B cell (primary cell): ENCODE measurements at regions of chr22 and their contacts with region 1.

Region 1: DNA sequence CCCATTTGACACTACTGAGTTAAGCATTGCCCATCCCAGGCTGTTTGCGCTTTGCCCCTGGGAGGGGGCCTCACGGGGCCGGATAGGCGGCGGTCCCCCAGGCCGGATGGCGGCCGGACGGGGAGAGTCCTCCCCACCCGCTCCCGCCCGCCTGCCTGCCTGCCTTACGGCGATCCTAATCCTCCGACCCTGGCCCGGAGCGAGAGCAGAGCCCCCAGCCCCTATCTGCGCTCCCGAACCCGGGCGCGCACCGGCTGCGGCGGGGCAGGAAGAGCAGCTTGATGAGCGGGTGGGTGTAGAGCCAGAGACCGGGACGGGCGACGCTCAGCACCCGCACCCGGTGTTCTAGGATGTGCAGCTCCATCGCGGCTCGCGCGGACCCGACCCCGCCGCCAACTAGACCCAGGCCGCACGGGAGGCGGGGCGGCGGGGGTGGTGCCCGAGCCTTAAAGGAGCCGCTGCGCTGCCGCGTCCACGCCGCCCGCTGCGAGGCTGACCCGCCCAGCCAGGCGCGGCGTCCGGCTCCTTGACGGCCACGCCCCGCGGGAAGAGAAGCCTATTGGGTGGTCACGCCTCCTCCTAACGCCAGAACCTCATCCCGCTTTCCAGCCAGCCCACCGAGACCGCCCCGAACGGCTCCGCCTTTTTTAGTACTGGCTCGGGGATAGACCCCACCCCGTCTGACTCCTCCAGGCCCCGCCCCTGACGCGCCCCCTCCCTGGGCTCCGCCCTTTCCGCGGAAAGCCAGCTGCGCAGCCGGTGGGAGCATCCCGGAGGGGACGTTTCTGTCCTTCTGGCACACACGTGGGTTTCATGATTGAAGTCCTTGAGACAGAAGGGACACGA is at the start of gene CASTOR1:
- DNase-seq: peak; percentile 86
- ATAC-seq: peak; percentile 83
- H3K4me3 ChIP-seq: peak within 1 kb of the TSS; percentile 48 to 83 (median 70)
- H3K4me3 Mint-ChIP-seq: peak within 1 kb of the TSS; percentile 93
- H3K27ac ChIP-seq: peak within 1 kb of the TSS; percentile 34 to 72
- H3K27ac Mint-ChIP-seq: peak within 1 kb of the TSS; percentile 93
- H3K4me1 ChIP-seq: peaks cover 23 to 44% of the 10 kb centered on the region in 2 donors
- H3K4me1 Mint-ChIP-seq: peaks cover 38% of the 10 kb centered on the region
- H3K27me3 ChIP-seq: no peaks in the 10 kb centered on the region
- H3K27me3 Mint-ChIP-seq: no peaks in the 10 kb centered on the region
- CTCF ChIP-seq: no peak
- total RNA-seq, gene CASTOR1: 12.3 and 16.3 TPM in 2 replicates

Region 2: DNA sequence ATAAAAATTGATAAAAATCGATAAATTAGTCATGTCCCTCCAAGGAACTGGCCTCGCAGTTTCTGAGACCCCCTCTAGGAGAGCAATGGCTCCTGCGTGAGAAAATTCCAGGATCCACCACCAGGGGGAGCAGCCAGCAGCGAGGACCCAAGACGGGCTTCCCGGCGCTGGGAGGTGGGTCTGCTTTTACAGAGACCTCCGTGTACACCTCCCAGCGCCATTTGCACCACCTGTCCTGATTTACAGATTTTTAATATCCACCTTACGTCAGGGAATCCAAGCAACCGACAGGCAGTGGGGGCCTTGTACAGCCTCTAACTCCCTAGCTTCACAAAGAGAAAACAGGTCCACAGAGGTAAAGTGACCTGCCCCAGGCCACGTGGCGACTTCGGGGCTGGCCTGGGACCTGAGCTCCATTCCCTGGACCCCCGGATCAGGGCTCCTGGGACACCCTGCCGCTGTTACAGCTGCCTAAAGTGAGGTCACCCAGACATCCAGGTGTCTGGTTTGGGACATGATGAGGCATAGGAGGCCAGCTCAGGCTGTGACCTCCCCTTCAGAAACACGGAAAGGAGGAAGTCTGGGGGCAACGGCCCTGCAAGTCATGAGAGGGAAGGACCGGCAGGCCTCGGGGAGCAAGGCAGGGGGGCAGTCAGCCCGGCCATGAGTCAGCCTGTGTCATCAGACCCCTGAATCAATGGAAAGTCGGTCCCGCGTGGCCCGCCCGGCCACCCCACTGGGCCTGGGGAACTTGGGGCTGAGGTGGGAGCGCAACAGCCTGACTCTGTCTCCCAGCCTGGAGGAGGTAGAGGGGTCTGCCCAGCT is 26.2 kb before region 1 on chr22:
- CTCF ChIA-PET with region 1: no interaction called
- POLR2A ChIA-PET with region 1: no interaction called
- intact Hi-C with region 1: loop called (anchors 1 kb)
- DNase-seq: peak; percentile 86
- ATAC-seq: no peak
- H3K4me3 ChIP-seq: peak overlapping the region in 3 of 5 experiments; percentile 13 to 42 (median 27)
- H3K4me3 Mint-ChIP-seq: peak overlapping the region; percentile 67
- H3K27ac ChIP-seq: no peak overlapping the region
- H3K27ac Mint-ChIP-seq: peak overlapping the region; percentile 37
- H3K4me1 ChIP-seq: peaks cover 20 to 35% of the 10 kb centered on the region in 2 donors
- H3K4me1 Mint-ChIP-seq: peaks cover 31% of the 10 kb centered on the region
- H3K27me3 ChIP-seq: no peaks in the 10 kb centered on the region
- H3K27me3 Mint-ChIP-seq: no peaks in the 10 kb centered on the region
- CTCF ChIP-seq: peak; percentile 100

Region 3: GRCh38 chr22:30332561-30332960 is 43.2 kb after region 1 on chr22:
- CTCF ChIA-PET with region 1: interaction called, 99 read pairs
- POLR2A ChIA-PET with region 1: interaction called, 64 read pairs
- intact Hi-C with region 1: loop called (anchors 1 kb)
- DNase-seq: no peak
- ATAC-seq: no peak
- H3K4me3 ChIP-seq: no peak overlapping the region
- H3K4me3 Mint-ChIP-seq: no peak overlapping the region
- H3K27ac ChIP-seq: no peak overlapping the region
- H3K27ac Mint-ChIP-seq: no peak overlapping the region
- H3K4me1 ChIP-seq: peaks cover 3 to 4% of the 10 kb centered on the region in 2 donors
- H3K4me1 Mint-ChIP-seq: peaks cover 5% of the 10 kb centered on the region
- H3K27me3 ChIP-seq: no peaks in the 10 kb centered on the region
- H3K27me3 Mint-ChIP-seq: no peaks in the 10 kb centered on the region
- CTCF ChIP-seq: no peak

Region 4: GRCh38 chr22:30368431-30368830 is 79.1 kb after region 1 on chr22:
- CTCF ChIA-PET with region 1: interaction called, 11 read pairs
- POLR2A ChIA-PET with region 1: no interaction called
- intact Hi-C with region 1: no loop called
- DNase-seq: no peak
- ATAC-seq: no peak
- H3K4me3 ChIP-seq: no peak overlapping the region
- H3K4me3 Mint-ChIP-seq: no peak overlapping the region
- H3K27ac ChIP-seq: no peak overlapping the region
- H3K27ac Mint-ChIP-seq: no peak overlapping the region
- H3K4me1 ChIP-seq: no peaks in the 10 kb centered on the region
- H3K4me1 Mint-ChIP-seq: no peaks in the 10 kb centered on the region
- H3K27me3 ChIP-seq: no peaks in the 10 kb centered on the region
- H3K27me3 Mint-ChIP-seq: no peaks in the 10 kb centered on the region
- CTCF ChIP-seq: no peak

Region 5: GRCh38 chr22:30485362-30485988 is 196.1 kb after region 1 on chr22:
- CTCF ChIA-PET with region 1: interaction called, 23 read pairs
- POLR2A ChIA-PET with region 1: no interaction called
- intact Hi-C with region 1: no loop called
- DNase-seq: peak; percentile 80
- ATAC-seq: peak; percentile 96
- H3K4me3 ChIP-seq: no peak overlapping the region
- H3K4me3 Mint-ChIP-seq: no peak overlapping the region
- H3K27ac ChIP-seq: no peak overlapping the region
- H3K27ac Mint-ChIP-seq: no peak overlapping the region
- H3K4me1 ChIP-seq: no peaks in the 10 kb centered on the region
- H3K4me1 Mint-ChIP-seq: no peaks in the 10 kb centered on the region
- H3K27me3 ChIP-seq: peaks cover 0 to 3% (median 0%) of the 10 kb centered on the region in 4 experiments
- H3K27me3 Mint-ChIP-seq: peaks cover 20% of the 10 kb centered on the region
- CTCF ChIP-seq: peak; percentile 97